ENCODE measurements at regions of chr10 and their contacts with region 1.

Region 1: DNA sequence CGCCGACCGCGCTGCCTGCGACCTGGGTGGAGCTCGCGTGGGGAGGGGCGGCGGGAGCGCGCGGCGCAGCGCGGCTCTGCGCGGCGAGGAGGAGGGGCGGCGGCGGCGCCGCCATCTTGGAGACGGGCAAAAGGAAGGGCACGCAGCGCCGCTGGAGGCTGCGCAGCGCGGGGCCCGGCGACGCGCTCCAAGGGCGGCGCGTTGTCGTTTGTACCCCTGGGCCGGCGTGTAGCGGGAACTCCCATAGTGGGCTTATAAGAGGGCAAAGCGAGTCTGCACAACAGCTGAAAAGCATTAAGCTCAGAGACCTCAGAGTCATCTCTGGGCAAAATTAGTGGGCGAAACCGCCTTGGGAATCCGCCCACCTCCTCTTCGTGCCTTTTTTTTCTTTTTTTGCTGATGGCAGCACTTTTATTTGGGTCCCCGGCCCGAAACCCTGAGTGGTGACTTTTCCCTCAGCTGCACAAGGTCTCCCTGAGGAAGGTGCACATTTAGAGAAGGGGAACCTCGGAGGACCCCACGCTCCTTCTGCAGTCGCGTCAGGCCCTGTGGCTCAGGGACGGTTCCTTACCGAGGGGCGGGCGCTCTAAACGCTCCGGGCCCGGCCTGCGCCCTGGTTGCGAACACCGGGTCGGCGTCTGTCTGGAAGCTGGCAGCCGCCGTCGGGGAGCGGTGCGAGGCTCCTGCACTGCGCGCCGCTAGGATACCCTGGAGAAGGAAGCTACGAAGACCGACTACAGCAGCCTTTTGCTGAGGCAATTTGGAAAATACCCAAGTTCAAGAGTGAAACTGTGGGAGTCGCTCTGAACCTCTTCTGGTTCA is 428 bp upstream of the MCMBP start:
- DNase-seq: peak; percentile 78 to 96 (median 86)
- ATAC-seq: peak; percentile 90
- H3K4me3 ChIP-seq: peak overlapping the region; percentile 80
- H3K4me3 Mint-ChIP-seq: peak overlapping the region; percentile 93
- H3K27ac ChIP-seq: peak overlapping the region; percentile 78 to 87
- H3K27ac Mint-ChIP-seq: peak overlapping the region; percentile 94
- H3K4me1 ChIP-seq: peaks cover 37% of the 10 kb centered on the region
- H3K4me1 Mint-ChIP-seq: peaks cover 35% of the 10 kb centered on the region
- H3K27me3 ChIP-seq: no peaks in the 10 kb centered on the region
- H3K27me3 Mint-ChIP-seq: no peaks in the 10 kb centered on the region
- CTCF ChIP-seq: no peak

Region 2: GRCh38 chr10:119080521-119081260 is 792.4 kb before region 1 on chr10 and contains the start of gene EIF3A:
- CTCF ChIA-PET with region 1: no interaction called
- POLR2A ChIA-PET with region 1: interaction called, 5 read pairs
- intact Hi-C with region 1: loop called in 1 of 2 experiments (anchors 5 kb)
- DNase-seq: peak; percentile 82 to 96 (median 88)
- ATAC-seq: peak; percentile 69
- H3K4me3 ChIP-seq: peak within 1 kb of the TSS; percentile 99
- H3K4me3 Mint-ChIP-seq: peak within 1 kb of the TSS; percentile 100
- H3K27ac ChIP-seq: peak within 1 kb of the TSS; percentile 92 to 96
- H3K27ac Mint-ChIP-seq: peak within 1 kb of the TSS; percentile 99
- H3K4me1 ChIP-seq: peaks cover 33% of the 10 kb centered on the region
- H3K4me1 Mint-ChIP-seq: peaks cover 64% of the 10 kb centered on the region
- H3K27me3 ChIP-seq: no peaks in the 10 kb centered on the region
- H3K27me3 Mint-ChIP-seq: no peaks in the 10 kb centered on the region
- CTCF ChIP-seq: no peak
- total RNA-seq, gene EIF3A: 129 TPM

Region 3: GRCh38 chr10:119596537-119597404 is 276.3 kb before region 1 on chr10 and contains the start of gene TIAL1:
- CTCF ChIA-PET with region 1: no interaction called
- POLR2A ChIA-PET with region 1: no interaction called
- intact Hi-C with region 1: loop called in 1 of 2 experiments (anchors 2 kb)
- DNase-seq: peak; percentile 82 to 97 (median 90)
- ATAC-seq: peak; percentile 82
- H3K4me3 ChIP-seq: peak within 1 kb of the TSS; percentile 70
- H3K4me3 Mint-ChIP-seq: peak within 1 kb of the TSS; percentile 98
- H3K27ac ChIP-seq: peak within 1 kb of the TSS; percentile 87 to 96
- H3K27ac Mint-ChIP-seq: peak within 1 kb of the TSS; percentile 95
- H3K4me1 ChIP-seq: peaks cover 22% of the 10 kb centered on the region
- H3K4me1 Mint-ChIP-seq: peaks cover 60% of the 10 kb centered on the region
- H3K27me3 ChIP-seq: no peaks in the 10 kb centered on the region
- H3K27me3 Mint-ChIP-seq: no peaks in the 10 kb centered on the region
- CTCF ChIP-seq: no peak
- total RNA-seq, gene TIAL1: 159 to 174 TPM

Region 4: GRCh38 chr10:119761106-119761505 is 112.0 kb before region 1 on chr10:
- CTCF ChIA-PET with region 1: no interaction called
- POLR2A ChIA-PET with region 1: no interaction called
- intact Hi-C with region 1: no loop called
- DNase-seq: no peak
- ATAC-seq: no peak
- H3K4me3 ChIP-seq: no peak overlapping the region
- H3K4me3 Mint-ChIP-seq: no peak overlapping the region
- H3K27ac ChIP-seq: no peak overlapping the region
- H3K27ac Mint-ChIP-seq: no peak overlapping the region
- H3K4me1 ChIP-seq: no peaks in the 10 kb centered on the region
- H3K4me1 Mint-ChIP-seq: no peaks in the 10 kb centered on the region
- H3K27me3 ChIP-seq: no peaks in the 10 kb centered on the region
- H3K27me3 Mint-ChIP-seq: no peaks in the 10 kb centered on the region
- CTCF ChIP-seq: no peak

Region 5: DNA sequence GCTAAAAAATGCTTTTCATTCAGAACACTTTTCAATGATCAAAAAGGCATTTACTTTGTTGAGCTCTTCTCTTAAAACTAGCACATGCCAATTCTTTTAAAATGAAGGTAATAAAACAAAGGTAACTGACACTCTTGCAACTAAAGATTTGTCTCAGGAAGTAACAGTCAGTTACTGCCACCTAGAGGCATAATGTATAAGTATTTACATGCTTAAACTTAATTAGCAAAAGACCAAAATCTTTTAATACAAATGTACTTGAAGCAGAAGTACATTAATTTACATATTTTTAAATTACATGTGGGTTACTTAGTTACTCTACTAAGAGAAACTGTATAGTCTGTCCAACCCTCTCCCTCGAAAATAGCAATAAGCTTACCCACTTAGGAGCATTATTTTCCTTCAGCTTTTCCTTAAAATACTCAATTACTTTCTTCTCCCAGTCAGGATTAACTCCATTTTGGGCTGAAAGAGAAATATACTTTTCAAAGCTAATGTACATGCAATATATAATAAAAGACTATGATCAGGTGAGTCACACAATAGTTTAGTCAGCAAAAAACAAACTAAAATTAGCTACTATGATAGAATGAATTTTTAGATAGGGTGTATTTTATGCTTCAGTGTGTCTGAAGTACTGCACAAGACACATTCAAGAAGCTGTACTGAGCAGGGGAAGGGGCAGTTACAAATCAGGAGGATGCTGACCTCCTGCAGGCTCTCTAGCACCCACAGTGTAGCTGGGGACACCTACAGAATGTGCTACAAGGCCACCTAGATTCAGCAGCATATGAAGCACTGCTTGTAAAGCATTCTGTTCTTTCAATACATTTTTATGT is 13.4 kb before region 1 on chr10:
- CTCF ChIA-PET with region 1: interaction called, 18 read pairs
- POLR2A ChIA-PET with region 1: interaction called, 34 read pairs
- intact Hi-C with region 1: no loop called
- DNase-seq: peak in 3 of 14 experiments; percentile 65 to 73 (median 72)
- ATAC-seq: peak; percentile 60
- H3K4me3 ChIP-seq: no peak overlapping the region
- H3K4me3 Mint-ChIP-seq: no peak overlapping the region
- H3K27ac ChIP-seq: no peak overlapping the region
- H3K27ac Mint-ChIP-seq: peak overlapping the region; percentile 4
- H3K4me1 ChIP-seq: peaks cover 4% of the 10 kb centered on the region
- H3K4me1 Mint-ChIP-seq: peaks cover 46% of the 10 kb centered on the region
- H3K27me3 ChIP-seq: no peaks in the 10 kb centered on the region
- H3K27me3 Mint-ChIP-seq: no peaks in the 10 kb centered on the region
- CTCF ChIP-seq: peak; percentile 88